HEK293T (cell line): ENCODE measurements at regions of chr17 and their contacts with region 1.

Region 1: GRCh38 chr17:73192894-73193701 is at the start of gene COG1:
- DNase-seq: peak; percentile 93

Region 2: GRCh38 chr17:73156166-73156840 is 36.8 kb before region 1 on chr17:
- CTCF ChIA-PET with region 1: no interaction called
- POLR2A ChIA-PET with region 1: no interaction called
- DNase-seq: peak; percentile 84

Region 3: DNA sequence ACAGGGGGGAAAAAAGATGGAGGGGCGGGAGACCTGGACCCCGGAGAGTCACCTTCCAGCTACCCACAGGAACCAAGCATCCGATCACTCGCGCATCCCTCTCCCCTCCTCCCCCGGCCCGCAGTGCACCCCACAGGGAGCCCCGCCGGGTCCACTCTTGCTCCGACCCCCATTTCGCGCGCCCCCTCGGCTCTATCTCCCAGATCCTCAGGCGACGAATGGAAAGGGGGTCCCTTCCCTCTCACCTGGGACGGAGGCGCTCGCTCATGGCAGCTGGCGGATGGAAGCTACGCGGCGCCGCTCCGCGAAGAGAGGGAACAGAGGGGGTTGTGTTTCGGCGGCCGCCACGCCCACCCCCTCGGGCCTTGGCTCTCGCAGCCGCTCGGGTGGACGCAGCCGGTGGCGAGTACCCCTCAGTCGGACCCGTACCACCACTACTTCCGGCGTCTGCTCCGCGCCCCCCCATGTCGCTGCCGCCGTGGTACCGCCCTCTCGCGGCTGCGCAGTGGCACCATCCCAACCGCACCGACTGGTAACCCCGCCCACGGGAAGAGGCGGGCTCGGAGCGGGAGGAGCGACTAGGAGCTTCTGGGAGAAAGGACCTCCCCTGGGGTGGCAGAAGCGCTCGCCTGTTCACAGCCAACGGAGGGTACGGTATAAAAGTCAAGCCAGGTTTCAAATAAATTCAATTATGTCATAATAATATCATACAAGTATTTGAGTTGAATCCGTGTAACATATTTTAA is 38.9 kb after region 1 on chr17:
- CTCF ChIA-PET with region 1: interaction called, 4 read pairs
- POLR2A ChIA-PET with region 1: interaction called, 19 read pairs
- DNase-seq: peak; percentile 99